ENCODE measurements at regions of chr18 and their contacts with region 1.

Region 1: GRCh38 chr18:22185273-22185672 is 15.9 kb downstream of the GATA6 start:
- DNase-seq: peak; percentile 52
- H3K4me3 ChIP-seq: peak overlapping the region; percentile 36
- H3K27ac ChIP-seq: peak overlapping the region; percentile 100
- H3K4me1 ChIP-seq: peaks cover 100% of the 10 kb centered on the region
- H3K27me3 ChIP-seq: no peaks in the 10 kb centered on the region
- CTCF ChIP-seq: peak; percentile 59

Region 2: GRCh38 chr18:22223254-22223960 is 38.1 kb after region 1 on chr18:
- intact Hi-C with region 1: no loop called
- DNase-seq: peak; percentile 77
- H3K4me3 ChIP-seq: no peak overlapping the region
- H3K27ac ChIP-seq: no peak overlapping the region
- H3K4me1 ChIP-seq: peaks cover 18% of the 10 kb centered on the region
- H3K27me3 ChIP-seq: no peaks in the 10 kb centered on the region
- CTCF ChIP-seq: no peak

Region 3: GRCh38 chr18:22348521-22349316 is 163.4 kb after region 1 on chr18:
- intact Hi-C with region 1: loop called (anchors 10 kb)
- DNase-seq: peak; percentile 83
- H3K4me3 ChIP-seq: peak overlapping the region; percentile 70
- H3K27ac ChIP-seq: peak overlapping the region; percentile 96
- H3K4me1 ChIP-seq: peaks cover 62% of the 10 kb centered on the region
- H3K27me3 ChIP-seq: no peaks in the 10 kb centered on the region
- CTCF ChIP-seq: peak; percentile 7

Measured in left ventricle myocardium inferior (tissue), 1 donor.